ENCODE measurements at regions of chr2 and their contacts with region 1.

Region 1: GRCh38 chr2:99489761-99490622 is at the start of gene REV1:
- DNase-seq: peak; percentile 96 to 97 (median 96)
- ATAC-seq: peak; percentile 89
- H3K4me3 ChIP-seq: peak within 1 kb of the TSS; percentile 62
- H3K27ac ChIP-seq: peak within 1 kb of the TSS; percentile 90
- H3K4me1 ChIP-seq: peaks cover 10 to 12% of the 10 kb centered on the region in 2 experiments
- H3K27me3 ChIP-seq: no peaks in the 10 kb centered on the region
- CTCF ChIP-seq: peak; percentile 78 to 85 (median 84)
- EP300 ChIP-seq: no peak
- POLR2A ChIP-seq: no peak; the same call in 1 of the 2 replicates
- RAD21 ChIP-seq: peak; percentile 80 to 81
- polyA plus RNA-seq, gene REV1: 12.8 to 13.1 TPM

Region 2: GRCh38 chr2:98560256-98560771 is 929.7 kb before region 1 on chr2:
- CTCF ChIA-PET with region 1: no interaction called
- POLR2A ChIA-PET with region 1: no interaction called
- in situ Hi-C with region 1: no loop called
- intact Hi-C with region 1: no loop called
- DNase-seq: peak; percentile 91 to 94 (median 94)
- ATAC-seq: peak; percentile 99
- H3K4me3 ChIP-seq: peak overlapping the region; percentile 5; the same call in 1 of the 2 replicates
- H3K27ac ChIP-seq: peak overlapping the region; percentile 84
- H3K4me1 ChIP-seq: peaks cover 15 to 24% of the 10 kb centered on the region in 2 experiments
- H3K27me3 ChIP-seq: no peaks in the 10 kb centered on the region
- CTCF ChIP-seq: no peak
- EP300 ChIP-seq: peak; percentile 48; the same call in 1 of the 2 replicates
- POLR2A ChIP-seq: peak; percentile 63
- RAD21 ChIP-seq: no peak

Region 3: GRCh38 chr2:99085421-99085820 is 404.6 kb before region 1 on chr2:
- CTCF ChIA-PET with region 1: no interaction called
- POLR2A ChIA-PET with region 1: no interaction called
- in situ Hi-C with region 1: no loop called
- intact Hi-C with region 1: loop called (anchors 10 kb)
- DNase-seq: peak in 1 of 4 experiments; percentile 33
- ATAC-seq: peak; percentile 66; the same call in 2 of the 3 replicates
- H3K4me3 ChIP-seq: no peak overlapping the region
- H3K27ac ChIP-seq: no peak overlapping the region
- H3K4me1 ChIP-seq: no peaks in the 10 kb centered on the region
- H3K27me3 ChIP-seq: peaks cover 0 to 5% of the 10 kb centered on the region in 2 experiments; a peak in 1 of 5 replicates
- CTCF ChIP-seq: peak in 2 of 3 experiments; percentile 31 to 39; a peak in 4 of 6 replicates
- EP300 ChIP-seq: no peak
- POLR2A ChIP-seq: no peak
- RAD21 ChIP-seq: no peak

Region 4: DNA sequence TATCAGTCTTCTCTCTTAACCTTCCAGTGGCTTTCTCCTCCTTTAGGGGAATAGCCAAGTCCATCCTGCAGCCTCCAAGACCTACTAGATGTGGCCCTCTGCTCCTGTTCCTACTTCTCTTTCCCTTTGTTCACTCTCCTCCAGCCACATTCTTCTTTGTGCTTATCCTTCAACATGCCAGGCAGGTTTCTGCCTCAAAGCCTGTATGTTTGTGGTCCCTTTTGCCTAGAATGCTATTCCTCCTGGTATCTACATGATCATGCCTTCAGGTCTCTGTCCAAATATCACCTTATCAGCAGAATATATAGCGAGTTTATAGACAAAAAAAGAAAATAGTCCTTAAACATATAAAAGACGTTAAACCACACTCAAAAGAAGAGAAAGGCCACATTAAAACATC is 240.0 kb before region 1 on chr2:
- CTCF ChIA-PET with region 1: no interaction called
- POLR2A ChIA-PET with region 1: no interaction called
- in situ Hi-C with region 1: no loop called
- intact Hi-C with region 1: loop called (anchors 5 kb)
- DNase-seq: no peak
- ATAC-seq: no peak
- H3K4me3 ChIP-seq: no peak overlapping the region
- H3K27ac ChIP-seq: no peak overlapping the region
- H3K4me1 ChIP-seq: no peaks in the 10 kb centered on the region
- H3K27me3 ChIP-seq: no peaks in the 10 kb centered on the region
- CTCF ChIP-seq: no peak
- EP300 ChIP-seq: no peak
- POLR2A ChIP-seq: no peak
- RAD21 ChIP-seq: no peak

Region 5: DNA sequence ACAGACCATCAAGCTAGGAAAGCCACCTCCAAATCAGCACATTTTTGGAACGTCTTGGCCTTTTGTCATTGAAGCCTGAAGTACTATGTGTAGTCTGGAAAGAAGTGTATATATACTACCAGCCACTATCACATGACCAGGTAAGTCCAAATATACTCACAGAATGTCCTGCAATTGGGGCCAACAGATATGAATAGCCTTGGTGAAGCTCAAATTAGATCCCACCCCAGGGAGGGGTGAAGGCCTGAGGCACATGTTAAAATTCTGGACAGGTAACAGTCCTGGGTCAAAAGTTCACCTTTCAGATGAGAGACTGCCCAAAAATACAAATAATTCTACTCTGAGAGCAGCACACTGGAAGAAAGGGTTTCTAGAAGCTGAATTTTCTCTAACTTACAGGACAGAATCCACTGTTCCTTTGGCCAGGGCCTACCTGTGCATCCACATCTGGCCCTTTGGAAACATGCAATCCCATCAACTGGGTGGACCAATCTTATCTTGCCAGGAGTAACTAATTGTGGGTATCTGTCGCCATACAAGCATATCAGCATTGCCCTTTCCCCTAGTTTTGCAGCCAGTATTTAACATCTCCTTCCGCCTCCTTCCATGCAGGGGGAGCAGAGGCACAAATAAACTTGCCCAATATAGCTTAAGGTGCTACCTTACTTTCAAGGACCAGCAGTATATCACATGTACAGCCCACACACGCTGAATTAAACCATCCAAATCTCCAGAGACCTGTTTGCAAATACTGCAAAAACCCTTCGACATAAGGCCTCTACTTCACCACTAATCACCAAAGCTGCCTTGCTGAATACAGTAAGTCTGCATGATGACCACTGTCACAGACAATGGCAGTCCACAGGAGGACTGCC is 85.0 kb before region 1 on chr2:
- CTCF ChIA-PET with region 1: no interaction called
- POLR2A ChIA-PET with region 1: interaction called, 3 read pairs
- in situ Hi-C with region 1: no loop called
- intact Hi-C with region 1: loop called (anchors 5 kb)
- DNase-seq: no peak
- ATAC-seq: peak; percentile 12
- H3K4me3 ChIP-seq: no peak overlapping the region
- H3K27ac ChIP-seq: no peak overlapping the region
- H3K4me1 ChIP-seq: no peaks in the 10 kb centered on the region
- H3K27me3 ChIP-seq: no peaks in the 10 kb centered on the region
- CTCF ChIP-seq: no peak
- EP300 ChIP-seq: no peak
- POLR2A ChIP-seq: peak; percentile 55; the same call in 1 of the 2 replicates
- RAD21 ChIP-seq: no peak

Region 6: GRCh38 chr2:100262555-100263320 is 772.7 kb after region 1 on chr2:
- CTCF ChIA-PET with region 1: interaction called, 4 read pairs
- POLR2A ChIA-PET with region 1: no interaction called
- in situ Hi-C with region 1: no loop called
- intact Hi-C with region 1: loop called (anchors 2 kb)
- DNase-seq: peak; percentile 76 to 82 (median 81)
- ATAC-seq: peak; percentile 89
- H3K4me3 ChIP-seq: no peak overlapping the region
- H3K27ac ChIP-seq: no peak overlapping the region
- H3K4me1 ChIP-seq: peaks cover 3 to 8% of the 10 kb centered on the region in 2 experiments; a peak in 3 of 5 replicates
- H3K27me3 ChIP-seq: peaks cover 6 to 19% of the 10 kb centered on the region in 2 experiments; a peak in 3 of 5 replicates
- CTCF ChIP-seq: peak; percentile 91 to 94 (median 94)
- EP300 ChIP-seq: no peak
- POLR2A ChIP-seq: no peak
- RAD21 ChIP-seq: peak; percentile 97 to 99

Measured in K562 (cell line).